ENCODE measurements at regions of chr18 and their contacts with region 1.

Region 1: GRCh38 chr18:12520442-12520992 is 112.8 kb downstream of the PRELID3A start:
- DNase-seq: no peak
- H3K4me3 ChIP-seq: no peak overlapping the region
- H3K27ac ChIP-seq: no peak overlapping the region
- H3K4me1 ChIP-seq: peaks cover 26% of the 10 kb centered on the region
- H3K27me3 ChIP-seq: no peaks in the 10 kb centered on the region
- CTCF ChIP-seq: no peak

Region 2: GRCh38 chr18:12589448-12589847 is 68.9 kb after region 1 on chr18:
- intact Hi-C with region 1: loop called (anchors 10 kb)
- DNase-seq: no peak
- H3K4me3 ChIP-seq: no peak overlapping the region
- H3K27ac ChIP-seq: no peak overlapping the region
- H3K4me1 ChIP-seq: peaks cover 33% of the 10 kb centered on the region
- H3K27me3 ChIP-seq: no peaks in the 10 kb centered on the region
- CTCF ChIP-seq: no peak

Measured in left ventricle myocardium inferior (tissue), 1 donor.